ENCODE measurements at regions of chr4 and their contacts with region 1.

Region 1: GRCh38 chr4:84661191-84661939 is 78.4 kb downstream of the CDS1 start:
- DNase-seq: no peak

Region 2: DNA sequence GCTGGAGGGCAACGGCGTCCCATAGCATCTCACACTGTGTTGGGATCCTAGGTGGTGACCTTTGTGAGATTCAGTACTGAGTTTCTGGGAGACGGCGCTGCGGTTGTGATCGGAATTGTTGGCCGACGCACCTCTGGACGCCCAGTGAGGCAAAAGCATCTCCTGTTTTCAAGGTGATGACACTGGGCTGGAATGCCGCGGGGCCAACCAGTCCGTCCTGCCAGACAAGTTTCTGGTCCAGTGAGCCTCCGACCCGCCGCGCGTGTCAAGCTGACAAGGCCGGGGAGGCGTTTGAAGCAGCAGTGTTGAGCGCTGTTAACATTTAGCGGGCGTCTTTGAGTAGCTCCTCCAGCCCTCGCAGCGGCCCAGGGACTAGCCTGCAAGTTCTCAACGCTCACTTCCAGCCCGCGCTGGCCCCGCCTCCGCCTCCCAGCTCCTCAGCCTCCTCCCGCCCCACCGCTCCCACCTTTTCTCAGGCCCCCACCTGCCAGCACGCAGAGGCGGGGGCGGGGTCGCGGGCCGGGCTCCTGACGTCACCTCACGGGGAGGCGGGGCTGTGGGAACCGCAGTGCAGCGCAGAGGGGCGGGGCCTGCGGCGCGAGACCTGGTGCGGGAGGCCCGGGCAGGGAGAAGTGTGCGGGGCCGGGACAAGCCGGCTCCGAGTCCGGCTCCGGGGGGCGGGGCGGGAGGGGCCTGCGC is 78.9 kb before region 1 on chr4:
- intact Hi-C with region 1: no loop called
- DNase-seq: peak; percentile 83 to 99 (median 90)

Region 3: GRCh38 chr4:84708406-84709135 is 47.2 kb after region 1 on chr4:
- intact Hi-C with region 1: loop called (anchors 2 kb)
- DNase-seq: no peak